ENCODE measurements at regions of chrX and their contacts with region 1.

Region 1: GRCh38 chrX:152958524-152959465 is 35.1 kb downstream of the PNMA5 start:
- DNase-seq: peak; percentile 75 to 94 (median 88)
- H3K4me3 ChIP-seq: peak overlapping the region in 58 of 59 donors; percentile 1 to 61 (median 44)
- H3K27ac ChIP-seq: peak overlapping the region in 57 of 59 donors; percentile 11 to 93 (median 81)
- H3K27me3 ChIP-seq: peaks cover 0 to 71% (median 8%) of the 10 kb centered on the region in 45 donors
- CTCF ChIP-seq: peak; percentile 74 to 99 (median 93)

Region 2: DNA sequence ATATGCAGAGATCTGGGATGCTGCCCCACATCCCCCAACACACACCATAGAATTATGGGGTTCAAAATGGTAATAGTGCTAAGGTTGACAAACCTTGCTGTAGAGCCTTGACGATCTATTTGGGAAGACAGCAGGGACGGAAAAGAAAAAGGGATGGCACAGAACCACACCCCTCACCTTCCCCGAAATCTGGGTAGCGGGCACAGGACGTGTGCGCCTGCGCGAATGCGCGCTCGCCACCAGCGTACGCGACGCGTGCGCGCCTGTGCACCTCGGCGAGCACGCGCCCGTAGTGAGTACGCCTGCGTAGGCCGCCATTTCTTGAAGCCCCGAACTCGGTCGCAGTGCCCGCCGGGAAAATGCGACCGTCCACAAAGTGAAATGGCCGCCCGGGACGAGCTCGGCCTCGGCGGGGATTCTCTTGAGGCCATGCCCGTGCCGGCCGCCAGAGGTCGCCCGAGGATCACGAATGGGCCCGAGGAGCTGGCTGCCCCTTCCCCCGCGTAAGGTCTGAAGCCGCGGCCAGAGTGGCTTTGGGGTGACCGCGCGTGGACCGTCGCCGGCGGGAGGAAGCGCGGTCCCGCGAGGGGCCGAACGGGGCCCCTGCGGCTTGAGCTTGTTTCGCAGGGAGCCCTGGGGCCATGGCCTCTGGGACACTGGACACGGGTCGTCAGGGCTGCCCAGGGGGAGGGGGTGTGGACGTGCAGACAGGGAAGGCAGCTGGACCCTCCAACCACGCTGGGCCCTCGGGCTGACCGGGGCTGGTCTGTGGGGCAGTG is 17.3 kb before region 1 on chrX:
- intact Hi-C with region 1: loop called in 1 of 2 experiments (anchors 1 kb)
- DNase-seq: peak; percentile 79 to 88 (median 86)
- H3K4me3 ChIP-seq: peak overlapping the region; percentile 34 to 75 (median 59)
- H3K27ac ChIP-seq: peak overlapping the region in 58 of 59 donors; percentile 62 to 93 (median 87)
- H3K27me3 ChIP-seq: peaks cover 0 to 52% (median 18%) of the 10 kb centered on the region in 45 donors
- CTCF ChIP-seq: peak; percentile 56 to 94 (median 85)

Region 3: DNA sequence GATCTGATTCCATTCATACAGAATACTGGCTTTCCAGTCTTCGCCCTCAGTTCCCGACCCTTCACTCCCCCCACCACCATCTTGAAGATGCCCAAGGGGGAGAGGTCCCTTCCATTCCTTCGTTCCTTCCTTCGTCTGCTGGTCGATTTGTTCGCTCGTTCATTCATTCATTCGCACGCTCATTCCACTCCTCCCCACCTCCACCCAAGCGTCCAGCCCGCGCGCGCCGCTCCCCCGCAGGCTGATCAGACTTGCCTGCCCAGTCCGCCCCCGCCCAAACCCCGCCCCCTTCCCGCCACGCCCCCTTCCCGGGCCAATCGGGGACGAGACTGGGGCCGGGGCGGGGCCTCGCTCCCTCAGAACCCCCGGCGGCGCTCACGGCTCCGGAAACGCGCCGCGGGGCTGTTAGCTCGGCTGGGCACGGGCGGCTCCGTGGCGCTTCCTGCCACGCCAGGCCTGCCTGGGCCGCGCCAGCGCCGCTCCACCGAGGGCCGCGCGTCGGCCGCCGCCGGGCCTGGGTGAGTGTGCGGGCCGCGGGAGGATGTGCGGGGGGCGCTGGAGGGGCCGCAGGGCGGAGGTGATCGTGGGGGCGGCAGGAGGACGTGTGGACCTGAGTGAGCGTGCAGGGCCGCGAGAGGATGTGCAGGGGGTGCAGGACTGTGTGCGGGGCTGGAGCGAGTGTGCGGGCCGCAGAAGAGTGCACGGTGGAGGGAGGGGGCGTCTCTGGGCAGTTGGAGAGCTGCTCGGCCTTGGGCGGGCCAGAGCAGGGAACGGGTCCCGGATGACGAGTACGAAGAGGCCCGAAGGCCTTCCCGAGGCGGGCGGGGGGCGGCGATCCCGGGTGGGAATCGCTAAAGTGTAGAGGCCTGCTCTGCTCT is 375.2 kb after region 1 on chrX and contains the start of gene ZNF275:
- intact Hi-C with region 1: loop called in 1 of 2 experiments (anchors 10 kb)
- DNase-seq: peak; percentile 51 to 90 (median 72)
- H3K4me3 ChIP-seq: peak within 1 kb of the TSS in 58 of 59 donors; percentile 33 to 77 (median 64)
- H3K27ac ChIP-seq: peak within 1 kb of the TSS in 19 of 59 donors; percentile 14 to 68 (median 41)
- H3K27me3 ChIP-seq: peaks cover 0 to 48% (median 8%) of the 10 kb centered on the region in 45 donors
- CTCF ChIP-seq: peak in 3 of 56 donors; percentile 18 to 31 (median 20)
- total RNA-seq, gene ZNF275: 11.5 to 24.2 (median 17.8) TPM

Region 4: GRCh38 chrX:153460845-153461244 is 502.1 kb after region 1 on chrX:
- intact Hi-C with region 1: loop called in 1 of 2 experiments (anchors 10 kb)
- DNase-seq: peak in 9 of 10 donors; percentile 33 to 66 (median 58)
- H3K4me3 ChIP-seq: no peak overlapping the region
- H3K27ac ChIP-seq: no peak overlapping the region
- H3K27me3 ChIP-seq: peaks cover 0 to 84% (median 9%) of the 10 kb centered on the region in 45 donors
- CTCF ChIP-seq: peak in 54 of 56 donors; percentile 25 to 71 (median 58)

Region 5: GRCh38 chrX:153499876-153500275 is 541.1 kb after region 1 on chrX:
- intact Hi-C with region 1: loop called (anchors 5 to 10 kb)
- DNase-seq: peak; percentile 52 to 79 (median 71)
- H3K4me3 ChIP-seq: peak overlapping the region in 1 of 59 donors; percentile 20
- H3K27ac ChIP-seq: peak overlapping the region in 22 of 59 donors; percentile 6 to 77 (median 36)
- H3K27me3 ChIP-seq: peaks cover 0 to 64% (median 10%) of the 10 kb centered on the region in 45 donors
- CTCF ChIP-seq: peak in 3 of 56 donors; percentile 8 to 20 (median 19)

Region 6: GRCh38 chrX:153507484-153508178 is 548.8 kb after region 1 on chrX:
- intact Hi-C with region 1: loop called (anchors 5 to 10 kb)
- DNase-seq: peak; percentile 76 to 91 (median 84)
- H3K4me3 ChIP-seq: peak overlapping the region in 1 of 59 donors; percentile 8
- H3K27ac ChIP-seq: peak overlapping the region in 1 of 59 donors; percentile 44
- H3K27me3 ChIP-seq: peaks cover 0 to 81% (median 17%) of the 10 kb centered on the region in 45 donors
- CTCF ChIP-seq: peak; percentile 60 to 96 (median 87)

Region 7: DNA sequence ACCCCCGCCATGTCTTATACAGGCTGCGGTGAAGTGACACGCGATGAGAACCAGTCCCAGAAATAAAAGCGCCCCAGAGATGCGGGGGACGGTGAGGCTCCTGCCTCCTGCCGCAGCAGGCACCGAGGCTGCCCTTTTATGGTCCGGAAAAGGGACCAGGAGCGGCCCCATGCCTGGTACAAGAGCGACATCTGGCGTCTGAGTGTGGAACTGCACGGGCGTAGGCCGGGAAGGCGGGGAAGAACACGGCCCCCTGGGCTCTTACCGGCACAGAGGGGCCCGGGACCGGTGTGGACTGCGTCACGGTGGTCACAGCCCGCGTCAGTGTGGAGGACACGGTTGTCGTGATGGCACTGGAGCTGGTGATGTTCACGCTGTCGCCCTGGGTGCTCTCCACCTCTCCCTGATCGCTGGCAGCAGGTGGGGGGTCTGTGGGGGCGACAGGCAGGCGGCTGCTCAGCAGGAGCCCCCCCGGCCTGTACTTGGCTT is 994.6 kb after region 1 on chrX:
- intact Hi-C with region 1: loop called in 1 of 2 experiments (anchors 5 kb)
- DNase-seq: peak; percentile 68 to 85 (median 74)
- H3K4me3 ChIP-seq: peak overlapping the region in 3 of 59 donors; percentile 4 to 8 (median 5)
- H3K27ac ChIP-seq: peak overlapping the region in 55 of 59 donors; percentile 2 to 85 (median 65)
- H3K27me3 ChIP-seq: peaks cover 0 to 30% (median 0%) of the 10 kb centered on the region in 45 donors
- CTCF ChIP-seq: peak; percentile 79 to 100 (median 98)